Lower leg skin (tissue), 4 donors: ENCODE measurements at regions of chr12 and their contacts with region 1.

Region 1: GRCh38 chr12:52156736-52157565 is 34.9 kb downstream of the KRT80 start:
- DNase-seq: peak; percentile 78 to 97
- H3K4me3 ChIP-seq: no peak overlapping the region
- CTCF ChIP-seq: peak in 1 of 3 donors; percentile 90
- POLR2A ChIP-seq: no peak

Region 2: DNA sequence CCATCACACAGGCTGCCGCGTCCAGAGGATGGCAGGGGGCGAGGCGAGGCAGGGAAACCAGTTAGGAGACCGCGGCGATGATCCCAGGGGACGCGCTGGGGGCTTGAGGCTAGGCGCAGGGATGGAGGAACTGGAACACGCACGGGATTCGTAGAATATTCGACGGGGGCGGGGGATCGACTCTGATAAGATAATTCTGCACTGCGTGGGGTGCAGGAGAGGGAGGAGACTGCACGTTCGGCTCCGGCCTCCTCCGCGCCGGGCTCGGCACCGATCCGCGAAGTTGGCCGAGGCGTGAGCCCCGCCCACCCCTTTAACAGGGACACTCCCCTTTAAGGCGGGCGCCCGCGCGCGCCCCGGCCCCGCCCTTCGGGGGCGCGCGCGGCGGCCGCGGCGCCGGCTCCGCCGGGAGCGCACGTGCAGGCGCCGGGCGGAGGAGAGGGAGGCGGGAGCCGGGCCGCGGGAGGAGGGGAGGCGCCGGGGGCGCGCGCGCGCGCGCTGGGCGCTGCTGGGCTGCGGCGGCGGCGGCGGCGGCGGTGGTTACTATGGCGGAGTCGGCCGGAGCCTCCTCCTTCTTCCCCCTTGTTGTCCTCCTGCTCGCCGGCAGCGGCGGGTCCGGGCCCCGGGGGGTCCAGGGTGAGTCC is 205.6 kb before region 1 on chr12 and contains the start of gene ACVR1B:
- intact Hi-C with region 1: no loop called
- DNase-seq: peak; percentile 91 to 98
- H3K4me3 ChIP-seq: peak within 1 kb of the TSS; percentile 95
- CTCF ChIP-seq: no peak
- POLR2A ChIP-seq: no peak
- total RNA-seq, gene ACVR1B: 67.4 to 87.0 (median 80.5) TPM

Region 3: DNA sequence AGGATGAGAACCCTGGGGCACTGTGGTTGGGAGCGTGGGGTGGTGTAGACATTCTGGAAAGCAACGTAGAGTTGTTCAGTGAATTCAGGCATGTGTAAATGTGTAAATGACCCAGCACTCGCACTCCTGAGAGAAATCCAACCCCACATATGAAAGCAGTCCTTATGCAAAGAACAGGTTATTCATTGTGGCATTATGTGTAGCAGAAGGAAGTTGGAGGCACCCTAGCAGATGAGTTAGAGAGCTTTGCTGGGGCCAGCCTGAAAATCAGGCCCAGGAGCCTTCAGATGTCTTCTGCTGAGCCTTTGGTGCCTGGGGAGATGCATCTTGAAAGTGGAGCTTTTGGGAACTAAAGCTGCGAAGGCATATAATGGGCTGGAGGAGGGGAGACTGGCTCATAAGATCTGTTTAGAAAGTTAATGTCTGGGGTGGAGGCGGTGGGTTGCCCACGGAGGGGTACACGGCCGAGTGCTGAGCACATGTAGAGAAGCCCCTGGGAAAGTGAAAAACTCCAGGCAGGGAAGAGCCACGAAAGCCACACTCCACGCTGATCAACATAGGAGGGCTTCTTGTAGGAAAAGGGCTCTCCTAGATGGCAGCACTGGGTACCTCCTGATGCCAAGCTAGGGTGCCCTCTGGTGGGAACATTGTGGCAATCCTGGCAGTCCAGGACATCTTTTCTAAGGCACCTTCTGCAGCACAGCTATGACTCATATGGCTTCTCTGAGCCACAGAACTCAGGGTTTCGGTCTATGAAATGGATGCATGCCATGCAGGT is 170.3 kb after region 1 on chr12:
- intact Hi-C with region 1: loop called (anchors 5 kb)
- DNase-seq: peak; percentile 82 to 94
- H3K4me3 ChIP-seq: no peak overlapping the region
- CTCF ChIP-seq: peak in 1 of 3 donors; percentile 55
- POLR2A ChIP-seq: no peak

Region 4: DNA sequence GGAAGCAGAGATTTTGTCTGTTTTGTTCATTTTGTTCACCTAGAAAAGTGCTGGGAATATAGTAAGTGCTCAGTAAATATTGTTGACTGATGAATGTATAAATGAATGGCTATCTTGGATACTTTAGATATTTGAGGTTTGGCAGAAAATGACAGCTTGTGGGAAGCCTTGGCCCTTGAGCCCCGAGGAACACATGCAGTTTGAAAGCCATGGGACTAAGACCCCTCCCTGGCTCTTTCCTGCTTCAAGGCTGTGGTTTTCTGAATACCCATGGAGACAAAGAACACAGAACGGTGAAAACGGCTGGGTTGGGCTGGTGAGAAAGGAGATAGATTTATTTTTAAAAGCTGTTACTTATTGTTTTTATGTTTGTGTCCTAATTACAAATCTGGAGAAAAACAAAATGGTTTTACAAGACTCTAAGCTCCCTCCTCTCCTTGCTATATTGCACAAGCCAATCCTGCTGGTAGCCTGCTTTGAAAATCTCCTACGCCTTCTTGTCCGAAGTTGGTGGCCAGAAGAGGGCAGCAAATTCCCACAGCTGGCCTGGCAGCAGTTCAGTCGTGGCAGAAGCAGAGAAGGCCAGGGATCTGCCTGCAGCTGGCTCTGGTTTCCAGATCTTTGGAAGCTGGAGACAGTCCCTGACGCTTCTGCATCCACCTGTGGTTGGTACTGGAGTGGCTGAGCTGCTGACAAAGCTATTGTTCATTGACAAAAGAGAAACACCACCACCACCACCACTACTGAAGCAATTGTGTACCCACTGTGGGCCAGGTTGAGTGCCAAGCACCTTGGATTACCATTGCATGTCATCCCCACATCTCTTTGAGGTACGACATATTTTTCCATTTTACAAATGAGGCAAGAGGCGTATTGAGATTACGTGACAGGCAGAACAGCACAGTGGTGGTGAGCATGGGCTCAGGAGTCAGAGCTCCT is 215.5 kb after region 1 on chr12:
- intact Hi-C with region 1: loop called (anchors 5 kb)
- DNase-seq: peak; percentile 89 to 96
- H3K4me3 ChIP-seq: no peak overlapping the region
- CTCF ChIP-seq: no peak
- POLR2A ChIP-seq: no peak